Mammary epithelial cell (primary cell): ENCODE measurements at regions of chr10 and their contacts with region 1.

Region 1: DNA sequence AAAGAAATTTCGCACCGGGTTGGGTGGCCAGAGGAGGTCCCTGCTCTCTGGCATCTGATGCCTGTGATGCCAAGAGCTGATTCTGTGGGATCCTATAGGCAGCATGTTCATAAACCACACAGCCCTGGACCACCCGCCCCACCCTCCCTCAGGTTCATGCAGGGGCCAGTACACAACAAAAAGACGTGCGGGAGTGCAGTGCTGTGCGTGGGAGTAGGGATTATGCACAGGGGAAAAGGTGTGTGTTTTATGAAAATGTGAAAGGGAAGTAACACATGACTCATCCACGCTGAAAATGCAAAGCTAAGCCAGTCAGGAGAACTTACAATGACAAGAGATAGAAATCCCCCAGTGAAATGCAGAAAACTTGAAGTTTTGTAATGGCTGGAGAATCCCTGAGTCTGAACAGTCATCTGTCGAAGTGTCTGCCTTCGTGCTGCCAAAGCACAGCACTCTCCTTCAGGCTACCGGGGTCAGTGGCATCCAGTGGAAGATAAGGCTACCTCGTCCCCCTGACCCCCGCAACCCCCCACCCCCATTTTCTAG is 1.1 kb downstream of the KIAA1217 start:
- DNase-seq: peak; percentile 91
- H3K4me3 ChIP-seq: peak overlapping the region; percentile 25 to 53 (median 42)
- H3K27ac ChIP-seq: peak overlapping the region; percentile 70
- H3K4me1 ChIP-seq: peaks cover 15% of the 10 kb centered on the region
- H3K27me3 ChIP-seq: no peaks in the 10 kb centered on the region
- CTCF ChIP-seq: no peak

Region 2: DNA sequence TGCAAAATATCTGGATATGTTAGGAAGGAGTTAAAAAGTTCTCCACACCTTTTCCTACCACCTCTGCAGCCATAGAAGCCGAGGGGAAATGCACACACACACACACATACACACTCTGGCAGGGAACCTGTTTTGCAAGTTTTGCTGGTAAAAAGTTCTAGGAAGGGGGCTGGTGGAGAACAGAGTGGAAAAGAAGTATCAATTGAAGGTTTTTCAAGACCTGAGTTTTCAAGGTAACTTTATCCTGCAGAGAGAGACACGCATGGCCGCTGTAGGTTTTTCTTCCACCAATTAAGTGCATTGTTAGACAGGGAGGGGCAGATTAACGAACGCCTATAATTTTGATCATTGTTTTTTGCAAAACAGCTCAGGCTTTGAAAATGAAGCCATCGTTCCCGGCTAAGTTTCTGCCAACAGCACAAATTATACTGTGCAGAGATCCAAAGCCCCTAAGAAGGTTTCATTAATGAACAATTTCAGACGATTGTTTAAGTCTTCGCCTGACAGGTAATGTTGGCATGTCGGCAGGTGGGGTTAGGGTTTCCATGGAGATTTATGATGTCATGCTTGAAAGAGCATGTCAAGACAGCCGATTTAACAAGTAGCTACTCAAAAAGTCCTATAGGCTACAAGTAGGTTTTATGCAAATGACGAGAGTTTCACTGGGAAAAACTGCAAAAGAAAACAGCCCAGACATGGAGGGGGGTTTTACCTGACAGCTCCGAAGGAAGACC is 28.7 kb after region 1 on chr10:
- CTCF ChIA-PET with region 1: no interaction called
- dilution Hi-C with region 1: no loop called
- in situ Hi-C with region 1: no loop called
- intact Hi-C with region 1: loop called (anchors 1 kb)
- DNase-seq: peak; percentile 91
- H3K4me3 ChIP-seq: peak overlapping the region; percentile 53 to 60 (median 58)
- H3K27ac ChIP-seq: peak overlapping the region; percentile 87
- H3K4me1 ChIP-seq: peaks cover 30% of the 10 kb centered on the region
- H3K27me3 ChIP-seq: no peaks in the 10 kb centered on the region
- CTCF ChIP-seq: no peak

Region 3: DNA sequence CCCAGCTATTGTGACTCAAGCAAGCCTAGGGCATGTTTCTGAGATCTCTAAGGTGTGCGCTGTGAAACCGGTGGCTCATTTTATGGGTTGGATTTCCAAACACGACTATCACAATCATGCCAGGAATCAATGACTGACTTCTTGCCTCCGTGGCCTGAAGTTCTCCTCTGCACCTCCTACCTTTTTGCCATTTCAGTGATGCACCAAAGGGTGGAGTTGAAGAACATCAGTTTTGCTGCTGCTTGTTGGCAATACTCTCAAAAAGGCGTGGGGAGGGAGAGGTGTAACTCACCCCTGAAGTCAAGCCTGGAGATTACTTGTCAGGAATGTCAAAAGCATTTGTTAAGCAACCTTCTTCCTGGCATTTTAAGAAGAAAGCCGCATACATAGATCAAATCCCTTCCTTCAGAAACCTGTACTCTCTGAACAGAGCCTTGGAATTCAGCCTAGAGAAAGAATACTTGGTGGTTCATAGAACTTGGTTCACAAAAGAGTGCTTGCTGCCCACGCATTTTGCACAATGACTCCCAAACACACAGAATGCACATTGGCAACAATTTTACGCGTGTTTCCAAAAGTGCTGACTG is 39.9 kb after region 1 on chr10:
- CTCF ChIA-PET with region 1: no interaction called
- dilution Hi-C with region 1: loop called (anchors 5 kb)
- in situ Hi-C with region 1: no loop called
- intact Hi-C with region 1: no loop called
- DNase-seq: peak; percentile 88
- H3K4me3 ChIP-seq: no peak overlapping the region
- H3K27ac ChIP-seq: peak overlapping the region; percentile 71
- H3K4me1 ChIP-seq: peaks cover 33% of the 10 kb centered on the region
- H3K27me3 ChIP-seq: no peaks in the 10 kb centered on the region
- CTCF ChIP-seq: peak in 1 of 2 donors; percentile 26

Region 4: GRCh38 chr10:24344279-24344678 is 134.3 kb after region 1 on chr10:
- CTCF ChIA-PET with region 1: no interaction called
- dilution Hi-C with region 1: no loop called
- in situ Hi-C with region 1: loop called in 1 of 2 experiments (anchors 25 kb)
- intact Hi-C with region 1: no loop called
- DNase-seq: peak; percentile 93
- H3K4me3 ChIP-seq: peak overlapping the region in 2 of 3 experiments; percentile 9 to 26
- H3K27ac ChIP-seq: peak overlapping the region; percentile 96
- H3K4me1 ChIP-seq: peaks cover 39% of the 10 kb centered on the region
- H3K27me3 ChIP-seq: no peaks in the 10 kb centered on the region
- CTCF ChIP-seq: no peak

Region 5: DNA sequence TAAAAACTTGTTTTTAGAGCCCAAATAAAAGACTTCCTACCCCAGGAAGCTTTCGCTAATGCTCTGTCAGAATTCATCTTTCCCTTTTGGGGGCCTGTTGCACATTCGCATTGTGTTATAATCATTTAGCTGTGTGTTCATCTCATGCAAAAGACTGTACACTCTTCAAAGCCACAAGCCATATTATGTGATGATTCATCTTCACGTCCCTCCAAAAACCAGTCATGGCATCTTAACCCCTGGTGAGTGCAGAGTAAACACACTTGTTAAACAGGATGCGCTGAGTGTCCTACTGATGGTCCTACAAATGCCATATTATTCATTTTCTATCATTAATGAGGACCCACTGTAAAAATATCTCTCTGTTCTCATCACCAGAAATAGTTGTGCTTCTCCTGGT is 234.3 kb after region 1 on chr10:
- CTCF ChIA-PET with region 1: no interaction called
- dilution Hi-C with region 1: no loop called
- in situ Hi-C with region 1: no loop called
- intact Hi-C with region 1: no loop called
- DNase-seq: peak; percentile 76
- H3K4me3 ChIP-seq: no peak overlapping the region
- H3K27ac ChIP-seq: no peak overlapping the region
- H3K4me1 ChIP-seq: peaks cover 30% of the 10 kb centered on the region
- H3K27me3 ChIP-seq: no peaks in the 10 kb centered on the region
- CTCF ChIP-seq: no peak